ENCODE measurements at regions of chrX and their contacts with region 1.

Region 1: GRCh38 chrX:94751611-94752010 is 1077.6 kb downstream of the FAM133A start:
- DNase-seq: no peak
- H3K4me3 ChIP-seq: no peak overlapping the region
- H3K27ac ChIP-seq: no peak overlapping the region
- H3K4me1 ChIP-seq: no peaks in the 10 kb centered on the region
- CTCF ChIP-seq: no peak

Region 2: DNA sequence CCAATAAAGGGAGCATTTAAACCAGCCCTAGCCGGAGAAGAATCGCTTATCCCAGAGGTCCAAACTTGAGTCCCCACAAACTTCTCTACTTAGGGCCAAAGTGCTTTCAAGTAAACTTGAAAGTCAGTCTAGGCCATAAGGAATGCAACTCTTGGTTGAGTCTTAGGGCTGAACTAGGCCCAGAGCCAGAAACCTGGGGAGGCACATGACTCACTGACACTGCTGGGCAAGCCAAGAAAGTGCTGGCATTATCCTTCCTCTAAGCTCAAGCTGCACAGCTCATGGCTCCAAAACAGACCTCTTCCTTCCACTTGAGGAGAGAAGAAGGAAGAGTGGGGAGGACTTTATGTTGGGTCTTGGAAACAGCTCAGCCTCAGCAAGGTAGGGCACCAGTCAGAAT is 675.8 kb after region 1 on chrX:
- CTCF ChIA-PET with region 1: no interaction called
- POLR2A ChIA-PET with region 1: no interaction called
- intact Hi-C with region 1: loop called (anchors 10 kb)
- DNase-seq: no peak
- H3K4me3 ChIP-seq: no peak overlapping the region
- H3K27ac ChIP-seq: no peak overlapping the region
- H3K4me1 ChIP-seq: no peaks in the 10 kb centered on the region
- CTCF ChIP-seq: no peak

Measured in OCI-LY7 (cell line).